ENCODE measurements at regions of chr1 and their contacts with region 1.

Region 1: GRCh38 chr1:165073185-165074007 is 283.1 kb downstream of the LMX1A start:
- DNase-seq: no peak
- ATAC-seq: peak; percentile 55 to 76 (median 68)
- H3K4me3 ChIP-seq: no peak overlapping the region
- H3K27ac ChIP-seq: no peak overlapping the region
- H3K4me1 ChIP-seq: peaks cover 0 to 12% (median 0%) of the 10 kb centered on the region in 9 donors
- H3K27me3 ChIP-seq: no peaks in the 10 kb centered on the region
- CTCF ChIP-seq: peak; percentile 64 to 84 (median 79)

Region 2: DNA sequence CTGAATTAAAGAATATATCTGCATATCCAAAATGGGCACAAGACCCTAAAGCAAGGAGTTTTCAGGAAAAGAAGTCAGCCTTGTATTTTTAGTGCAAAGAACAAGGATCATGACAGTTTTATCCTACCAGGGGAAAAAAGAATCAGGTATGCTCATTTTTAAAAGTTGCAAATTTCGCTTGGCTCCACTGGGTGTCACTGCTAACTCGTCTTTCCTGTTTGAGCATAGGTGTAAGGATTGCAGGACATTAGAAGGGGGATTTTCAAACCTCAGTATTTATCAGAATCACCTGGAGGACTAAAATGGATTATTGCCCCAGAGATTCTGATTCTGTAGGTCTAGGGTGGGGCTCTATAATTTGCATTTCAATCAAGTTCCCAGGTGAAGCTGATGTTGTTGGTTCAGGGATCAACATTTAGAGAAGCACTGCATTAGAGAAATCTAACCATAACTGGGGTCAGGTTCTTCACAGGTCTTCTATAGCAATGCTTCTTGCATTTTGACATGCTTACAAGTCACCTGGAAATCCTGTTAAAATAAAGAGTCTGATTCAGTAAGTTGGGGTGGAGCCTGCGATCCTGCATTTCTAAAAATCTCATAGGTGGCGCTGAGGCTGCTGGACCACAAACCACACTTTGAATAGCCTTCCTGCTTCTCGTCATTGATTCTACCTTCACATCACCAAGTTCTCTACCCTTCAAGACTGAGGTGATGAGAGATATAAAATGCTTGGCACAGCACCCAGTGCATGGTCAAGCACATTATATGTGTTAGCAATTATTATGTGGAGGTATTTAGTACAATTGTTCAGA is 1712.1 kb before region 1 on chr1:
- intact Hi-C with region 1: loop called in 6 of 10 experiments (anchors 5 to 10 kb)
- DNase-seq: no peak
- ATAC-seq: no peak
- H3K4me3 ChIP-seq: no peak overlapping the region
- H3K27ac ChIP-seq: no peak overlapping the region
- H3K4me1 ChIP-seq: peaks cover 0 to 4% (median 0%) of the 10 kb centered on the region in 9 donors
- H3K27me3 ChIP-seq: peaks cover 0 to 5% (median 0%) of the 10 kb centered on the region in 7 donors
- CTCF ChIP-seq: peak in 6 of 9 donors; percentile 24 to 55 (median 44)

Region 3: DNA sequence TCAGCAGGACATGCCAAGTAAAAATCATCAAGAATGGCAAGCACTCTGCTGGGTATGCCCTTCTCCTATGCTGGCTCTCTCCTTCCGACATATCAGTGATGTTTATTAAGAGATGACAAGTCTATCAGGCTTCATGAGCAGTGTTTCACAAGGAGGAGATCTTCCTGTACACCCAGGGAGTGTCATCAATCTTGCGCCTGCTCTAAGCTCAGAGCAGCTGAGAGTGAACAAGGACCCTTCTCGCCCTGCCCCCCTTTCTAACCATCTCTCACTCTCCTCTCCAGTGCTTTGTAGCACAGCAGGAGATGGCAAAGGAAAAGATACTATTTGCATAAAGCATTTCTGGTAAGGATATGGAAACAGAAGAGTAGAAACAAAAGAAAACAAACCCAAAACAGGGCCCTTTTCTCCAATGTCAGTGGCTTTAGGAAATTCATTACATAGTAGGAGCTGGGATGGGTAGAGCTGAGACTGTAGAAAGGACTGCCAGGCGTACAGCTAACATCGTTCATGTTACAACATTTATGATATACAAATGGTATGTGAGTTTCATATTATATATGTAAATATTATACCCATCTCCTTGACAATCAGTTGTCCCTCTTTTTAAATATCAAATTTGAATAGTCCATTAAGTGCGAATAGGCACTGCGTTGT is 1549.9 kb before region 1 on chr1:
- intact Hi-C with region 1: loop called in 1 of 10 experiments (anchors 5 kb)
- DNase-seq: no peak
- ATAC-seq: no peak
- H3K4me3 ChIP-seq: no peak overlapping the region
- H3K27ac ChIP-seq: no peak overlapping the region
- H3K4me1 ChIP-seq: no peaks in the 10 kb centered on the region
- H3K27me3 ChIP-seq: no peaks in the 10 kb centered on the region
- CTCF ChIP-seq: no peak

Region 4: GRCh38 chr1:163535807-163536206 is 1537.6 kb before region 1 on chr1:
- intact Hi-C with region 1: loop called in 8 of 10 experiments (anchors 5 to 10 kb)
- DNase-seq: no peak
- ATAC-seq: no peak
- H3K4me3 ChIP-seq: no peak overlapping the region
- H3K27ac ChIP-seq: no peak overlapping the region
- H3K4me1 ChIP-seq: no peaks in the 10 kb centered on the region
- H3K27me3 ChIP-seq: no peaks in the 10 kb centered on the region
- CTCF ChIP-seq: peak in 7 of 9 donors; percentile 24 to 51 (median 37)

Region 5: DNA sequence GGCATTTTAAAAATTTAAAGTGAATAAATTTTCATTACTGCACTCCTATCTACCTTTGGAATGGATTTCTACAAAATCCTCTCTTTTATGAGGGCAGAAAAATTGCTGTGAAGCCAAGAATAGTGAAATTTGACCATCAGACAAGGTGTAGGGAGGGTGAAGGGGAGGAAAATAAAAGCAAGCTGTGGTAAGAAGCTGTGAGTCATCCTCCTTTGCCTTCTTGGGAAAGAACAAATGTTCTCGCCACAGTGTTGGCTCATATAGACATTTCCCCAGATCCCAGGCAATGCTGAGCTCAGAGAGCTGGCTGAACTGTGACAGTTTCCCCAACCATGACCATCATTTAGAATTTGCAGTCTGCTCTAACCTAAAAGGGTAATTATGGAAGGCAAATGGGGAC is 279.1 kb before region 1 on chr1:
- intact Hi-C with region 1: loop called in 4 of 10 experiments (anchors 5 to 10 kb)
- DNase-seq: no peak
- ATAC-seq: peak in 7 of 8 donors; percentile 16 to 94 (median 74)
- H3K4me3 ChIP-seq: no peak overlapping the region
- H3K27ac ChIP-seq: no peak overlapping the region
- H3K4me1 ChIP-seq: peaks cover 0 to 38% (median 14%) of the 10 kb centered on the region in 9 donors
- H3K27me3 ChIP-seq: no peaks in the 10 kb centered on the region
- CTCF ChIP-seq: no peak

Region 6: GRCh38 chr1:164858101-164858632 is 215.2 kb before region 1 on chr1:
- intact Hi-C with region 1: no loop called
- DNase-seq: peak; percentile 16 to 28
- ATAC-seq: peak in 5 of 8 donors; percentile 49 to 79 (median 68)
- H3K4me3 ChIP-seq: no peak overlapping the region
- H3K27ac ChIP-seq: peak overlapping the region in 7 of 10 donors; percentile 4 to 66 (median 48)
- H3K4me1 ChIP-seq: peaks cover 0 to 38% (median 30%) of the 10 kb centered on the region in 9 donors
- H3K27me3 ChIP-seq: no peaks in the 10 kb centered on the region
- CTCF ChIP-seq: no peak

Region 7: DNA sequence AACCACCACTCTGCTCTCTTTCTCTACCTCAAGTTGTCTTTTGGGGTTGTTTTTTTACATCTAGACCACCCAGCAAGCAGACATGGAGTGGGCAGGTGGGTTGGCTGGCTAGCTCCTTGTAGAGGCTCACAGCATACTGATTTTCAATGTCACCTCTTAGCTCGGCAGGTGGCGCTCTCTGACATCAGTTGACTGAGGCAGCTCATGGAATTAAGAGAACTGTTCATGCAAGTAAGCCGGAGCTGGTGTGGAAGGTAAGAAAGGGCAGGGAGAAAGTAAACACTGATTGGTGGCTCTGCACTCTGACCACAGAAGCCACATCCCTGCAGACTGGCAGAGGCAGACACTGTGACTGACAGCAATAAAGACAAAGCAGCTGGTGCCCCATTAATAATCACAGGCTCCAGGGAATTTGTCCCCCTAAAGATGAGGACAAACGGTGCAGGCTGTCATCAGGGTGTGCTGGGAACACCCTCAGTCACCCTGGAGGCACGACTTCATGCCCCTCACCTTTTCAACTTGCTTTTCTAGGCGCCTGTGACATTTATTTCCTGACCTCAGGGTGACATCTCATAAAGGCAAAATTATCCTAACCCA is 56.3 kb after region 1 on chr1:
- intact Hi-C with region 1: no loop called
- DNase-seq: peak; percentile 25 to 35
- ATAC-seq: peak in 2 of 8 donors; percentile 61 to 70
- H3K4me3 ChIP-seq: no peak overlapping the region
- H3K27ac ChIP-seq: no peak overlapping the region
- H3K4me1 ChIP-seq: no peaks in the 10 kb centered on the region
- H3K27me3 ChIP-seq: peaks cover 0 to 71% (median 22%) of the 10 kb centered on the region in 7 donors
- CTCF ChIP-seq: peak in 8 of 9 donors; percentile 11 to 58 (median 49)

Region 8: GRCh38 chr1:165218731-165219130 is 145.3 kb after region 1 on chr1:
- intact Hi-C with region 1: no loop called
- DNase-seq: no peak
- ATAC-seq: no peak
- H3K4me3 ChIP-seq: no peak overlapping the region
- H3K27ac ChIP-seq: no peak overlapping the region
- H3K4me1 ChIP-seq: no peaks in the 10 kb centered on the region
- H3K27me3 ChIP-seq: peaks cover 0 to 9% (median 0%) of the 10 kb centered on the region in 7 donors
- CTCF ChIP-seq: no peak